ENCODE measurements at regions of chr14 and their contacts with region 1.

Region 1: GRCh38 chr14:20836668-20837338 is 34.2 kb upstream of the RNASE1 start:
- DNase-seq: peak; percentile 51
- ATAC-seq: peak; percentile 80
- H3K4me3 Mint-ChIP-seq: no peak overlapping the region
- H3K27ac Mint-ChIP-seq: peak overlapping the region; percentile 65; the same call in 1 of the 2 replicates
- H3K4me1 Mint-ChIP-seq: peaks cover 9% of the 10 kb centered on the region
- H3K27me3 Mint-ChIP-seq: no peaks in the 10 kb centered on the region
- CTCF ChIP-seq: no peak

Region 2: GRCh38 chr14:20848316-20848954 is 11.6 kb after region 1 on chr14:
- CTCF ChIA-PET with region 1: interaction called, 12 read pairs
- POLR2A ChIA-PET with region 1: no interaction called
- DNase-seq: no peak
- ATAC-seq: peak; percentile 16; the same call in 1 of the 2 replicates
- H3K4me3 Mint-ChIP-seq: no peak overlapping the region
- H3K27ac Mint-ChIP-seq: no peak overlapping the region
- H3K4me1 Mint-ChIP-seq: peaks cover 12% of the 10 kb centered on the region
- H3K27me3 Mint-ChIP-seq: no peaks in the 10 kb centered on the region
- CTCF ChIP-seq: no peak

Region 3: DNA sequence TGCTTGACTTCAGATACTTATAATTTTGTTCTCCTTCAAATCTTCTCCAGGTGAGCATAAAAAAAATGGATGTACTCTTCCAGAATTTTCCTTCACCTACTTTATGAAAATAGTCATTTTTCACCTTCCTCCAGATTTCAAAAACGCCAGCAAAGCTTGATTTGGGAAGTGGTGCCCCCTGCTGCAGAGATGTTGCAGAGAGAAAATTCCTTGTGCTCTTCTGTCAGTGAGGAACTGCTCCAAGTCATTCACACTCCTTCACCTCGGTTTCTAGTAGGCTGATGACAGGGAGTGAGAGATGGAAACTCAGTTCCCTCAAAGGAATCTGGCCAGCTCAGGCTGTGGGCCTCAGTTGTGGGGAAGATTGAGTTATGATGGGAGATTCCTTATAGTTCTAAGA is 30.2 kb after region 1 on chr14:
- CTCF ChIA-PET with region 1: interaction called, 14 read pairs
- POLR2A ChIA-PET with region 1: no interaction called
- DNase-seq: peak; percentile 30
- ATAC-seq: peak; percentile 73
- H3K4me3 Mint-ChIP-seq: no peak overlapping the region
- H3K27ac Mint-ChIP-seq: no peak overlapping the region
- H3K4me1 Mint-ChIP-seq: no peaks in the 10 kb centered on the region; the same call in 1 of the 2 replicates
- H3K27me3 Mint-ChIP-seq: peaks cover 21% of the 10 kb centered on the region
- CTCF ChIP-seq: no peak; the same call in 1 of the 2 replicates

Region 4: DNA sequence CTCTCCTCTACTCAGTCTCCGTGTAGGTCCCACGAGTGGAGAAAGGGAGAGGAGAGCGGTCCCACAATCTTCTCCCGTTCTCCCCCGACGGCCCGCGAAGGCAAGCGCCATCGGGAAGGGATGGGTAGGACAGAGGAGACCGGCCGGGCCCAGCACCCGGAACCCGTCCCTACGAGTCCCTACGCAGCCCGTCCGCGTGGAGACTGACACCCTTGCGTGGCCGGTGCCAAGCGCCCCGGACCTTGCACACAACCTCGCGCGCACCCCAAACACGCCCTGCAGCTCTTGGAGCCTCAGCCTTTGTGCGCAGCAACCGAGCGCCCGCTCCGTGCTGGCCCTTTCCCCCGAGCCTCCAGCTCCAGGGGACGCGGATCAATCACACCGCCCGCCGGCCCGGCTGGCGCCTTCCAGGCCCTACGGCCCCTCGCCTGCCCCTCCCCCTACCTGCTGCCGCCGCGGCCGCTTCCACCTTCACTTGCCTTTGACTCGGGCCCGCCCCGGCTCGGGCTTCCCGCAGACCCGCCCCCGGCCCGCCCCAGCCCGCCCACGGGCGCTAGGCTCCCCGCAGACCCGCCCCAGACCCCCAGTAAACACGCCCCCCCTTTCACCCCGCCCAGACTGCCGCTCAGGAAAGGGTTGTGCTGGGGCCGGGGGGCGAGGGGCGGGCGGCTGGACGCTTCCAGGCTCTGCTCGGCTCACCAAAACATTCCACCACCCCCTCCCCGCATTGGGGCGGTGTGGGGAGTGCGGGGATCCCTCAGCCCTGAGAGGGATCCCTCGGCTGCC is 188.0 kb after region 1 on chr14 and contains the start of gene NDRG2:
- CTCF ChIA-PET with region 1: no interaction called
- POLR2A ChIA-PET with region 1: no interaction called
- DNase-seq: peak; percentile 92
- ATAC-seq: peak; percentile 74
- H3K4me3 Mint-ChIP-seq: peak within 1 kb of the TSS; percentile 93
- H3K27ac Mint-ChIP-seq: peak within 1 kb of the TSS; percentile 99
- H3K4me1 Mint-ChIP-seq: peaks cover 39% of the 10 kb centered on the region
- H3K27me3 Mint-ChIP-seq: peaks cover 35% of the 10 kb centered on the region
- CTCF ChIP-seq: no peak
- total RNA-seq, gene NDRG2: 28.5 to 32.2 TPM (median 30.1 TPM) in 3 replicates

Measured in WTC11 (cell line).